H1 (cell line): ENCODE measurements at regions of chr20 and their contacts with region 1.

Region 1: GRCh38 chr20:63230800-63231268 is 4.9 kb upstream of the BIRC7 start:
- DNase-seq: peak in 1 of 2 experiments; percentile 77
- H3K4me3 ChIP-seq: no peak overlapping the region
- H3K27ac ChIP-seq: no peak overlapping the region
- H3K4me1 ChIP-seq: peaks cover 14 to 40% (median 24%) of the 10 kb centered on the region in 4 experiments
- H3K27me3 ChIP-seq: peaks cover 0 to 3% (median 1%) of the 10 kb centered on the region in 4 experiments; a peak in 2 of 7 replicates
- CTCF ChIP-seq: peak; percentile 83 to 90 (median 89)
- EP300 ChIP-seq: no peak
- POLR2A ChIP-seq: no peak
- RAD21 ChIP-seq: peak; percentile 47 to 59

Region 2: DNA sequence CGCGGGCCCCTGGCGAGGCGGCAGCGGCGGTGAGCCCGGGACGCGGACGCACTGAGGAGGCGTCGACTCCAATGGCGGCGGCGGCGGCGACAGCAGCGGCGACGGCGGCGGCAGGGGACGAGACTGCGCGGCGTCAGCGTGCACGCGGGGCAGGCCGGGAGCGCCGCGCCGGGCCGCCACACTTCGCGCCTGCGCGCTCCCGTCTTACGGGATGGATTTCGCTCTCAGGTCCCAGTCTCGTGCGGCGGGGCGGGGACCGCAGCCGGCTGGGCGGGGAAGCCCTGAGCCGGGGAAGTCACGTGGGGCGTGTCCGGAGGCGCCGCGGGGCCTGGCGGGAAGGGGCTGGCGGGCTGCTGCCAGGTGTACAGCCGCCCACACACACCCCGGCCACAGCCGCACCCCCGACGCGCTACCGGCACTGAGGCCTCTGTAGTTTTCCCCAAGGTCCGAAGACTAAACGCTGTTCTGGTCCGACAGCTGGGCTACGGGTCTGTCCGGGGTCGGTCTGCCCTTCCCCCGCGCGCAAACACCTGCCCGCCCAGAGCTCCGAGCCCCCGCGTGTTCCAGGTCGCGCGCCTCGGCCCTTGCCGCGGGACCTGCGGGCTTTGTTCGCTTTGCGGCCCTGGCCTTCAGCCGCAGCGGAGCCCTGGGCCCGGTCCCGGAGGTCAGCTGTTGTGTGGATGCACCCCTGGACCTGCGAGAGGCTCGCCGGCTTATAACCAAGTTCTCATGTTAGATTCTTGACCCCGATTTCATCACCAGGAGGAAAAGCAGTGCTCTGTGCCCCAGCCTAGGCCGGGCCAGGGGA is 14.6 kb before region 1 on chr20 and contains the start of gene YTHDF1:
- CTCF ChIA-PET with region 1: interaction called, 46 read pairs
- POLR2A ChIA-PET with region 1: interaction called, 3 read pairs
- DNase-seq: peak; percentile 70 to 96
- H3K4me3 ChIP-seq: peak within 1 kb of the TSS; percentile 69 to 92 (median 81)
- H3K27ac ChIP-seq: peak within 1 kb of the TSS; percentile 49; the same call in 1 of the 2 replicates
- H3K4me1 ChIP-seq: peaks cover 0 to 11% (median 2%) of the 10 kb centered on the region in 4 experiments; a peak in 4 of 7 replicates
- H3K27me3 ChIP-seq: peaks cover 0 to 3% (median 0%) of the 10 kb centered on the region in 4 experiments; a peak in 1 of 7 replicates
- CTCF ChIP-seq: no peak
- EP300 ChIP-seq: 0 out of 3 replicates have a peak, but pooled peaks of 1 of the 2 experiments have one; percentile 10
- POLR2A ChIP-seq: peak in 1 of 2 experiments; percentile 51; a peak in 1 of 3 replicates
- RAD21 ChIP-seq: no peak
- total RNA-seq, gene YTHDF1: 66.0 and 66.1 TPM in 2 replicates

Region 3: DNA sequence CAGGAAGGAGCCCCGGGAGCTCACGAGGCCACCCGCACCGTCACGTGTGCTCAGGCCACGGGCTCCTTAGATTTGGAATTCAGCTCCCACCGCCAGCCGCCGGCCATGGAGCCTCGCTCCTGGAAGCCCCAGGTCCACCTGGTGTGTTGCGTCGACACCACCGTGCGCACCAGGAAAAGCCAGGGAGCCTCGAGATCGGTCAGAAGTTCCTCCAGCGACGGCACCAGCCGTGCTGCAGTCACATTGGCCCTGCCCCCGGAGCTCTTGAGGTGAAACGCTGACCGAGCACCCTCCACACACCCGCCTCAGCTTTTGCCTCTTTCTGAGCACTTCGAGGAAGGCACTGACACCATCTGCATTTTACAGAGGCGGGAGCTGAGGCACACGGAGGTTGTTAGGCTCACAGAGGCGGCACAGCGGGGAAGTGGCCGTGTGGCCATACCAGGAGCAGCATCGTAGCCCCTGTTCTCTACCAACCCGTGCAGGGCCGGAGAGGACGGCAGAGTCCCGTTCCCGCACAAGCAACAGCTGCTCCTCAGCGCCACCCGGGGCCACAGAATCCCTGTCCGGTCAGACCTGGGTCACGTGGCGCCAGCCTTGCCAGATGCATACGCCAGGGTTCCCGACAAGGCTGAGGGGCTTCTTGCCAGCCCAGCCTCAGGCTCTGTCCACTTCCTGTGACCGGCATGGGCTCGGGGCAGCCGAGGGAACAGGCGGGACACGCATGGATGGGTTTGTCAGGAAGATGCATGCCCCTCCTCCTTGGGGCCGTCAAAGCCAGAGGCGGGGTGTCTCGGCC is 15.9 kb after region 1 on chr20:
- CTCF ChIA-PET with region 1: interaction called, 199 read pairs
- POLR2A ChIA-PET with region 1: interaction called, 10 read pairs
- DNase-seq: peak in 1 of 2 experiments; percentile 72
- H3K4me3 ChIP-seq: no peak overlapping the region
- H3K27ac ChIP-seq: no peak overlapping the region
- H3K4me1 ChIP-seq: peaks cover 0 to 20% (median 12%) of the 10 kb centered on the region in 4 experiments; a peak in 4 of 7 replicates
- H3K27me3 ChIP-seq: peaks cover 0 to 1% (median under 1%) of the 10 kb centered on the region in 4 experiments; a peak in 4 of 7 replicates
- CTCF ChIP-seq: 0 out of 4 replicates have a peak, but pooled peaks of 1 of the 3 experiments have one; percentile 5
- EP300 ChIP-seq: no peak
- POLR2A ChIP-seq: no peak
- RAD21 ChIP-seq: no peak

Region 4: DNA sequence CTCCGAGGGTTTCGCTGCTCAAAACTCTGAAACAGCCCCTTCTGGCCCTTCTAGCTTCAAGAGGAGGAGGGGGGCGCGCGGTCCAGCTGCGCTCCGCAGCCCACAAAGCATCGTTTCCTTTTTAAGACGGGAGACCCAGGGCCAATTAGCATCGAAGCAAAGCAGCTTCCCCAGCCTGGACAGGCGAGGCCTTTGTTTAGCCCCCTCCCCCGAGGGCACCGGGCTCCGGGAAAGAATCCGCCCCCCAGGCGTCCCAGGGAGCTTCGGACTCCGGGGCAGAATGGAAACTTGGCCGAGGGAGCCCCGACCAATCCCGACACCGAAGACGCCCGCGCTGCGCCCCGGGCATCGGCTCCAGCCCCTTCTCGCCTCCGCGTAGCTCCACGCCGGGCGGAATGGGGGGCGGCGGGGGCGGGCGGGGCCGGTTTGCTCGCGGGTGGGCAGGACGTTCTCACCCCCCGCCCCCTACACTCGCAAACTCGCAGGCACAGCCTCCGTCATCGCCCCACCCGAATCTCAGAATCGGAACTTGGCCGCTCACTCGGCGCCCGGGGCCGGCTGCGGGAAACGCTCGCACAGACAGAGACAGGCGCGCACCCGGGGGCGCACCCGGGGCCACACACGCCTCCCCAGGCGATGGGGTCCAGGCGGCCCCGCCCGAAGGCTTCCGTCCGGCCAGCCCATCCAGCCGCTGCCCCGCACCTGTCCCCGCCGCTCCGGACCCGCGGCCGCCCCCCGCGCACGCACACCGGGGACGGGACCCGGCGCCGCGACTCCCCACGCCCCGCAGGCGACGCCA is 22.8 kb after region 1 on chr20:
- CTCF ChIA-PET with region 1: interaction called, 103 read pairs
- POLR2A ChIA-PET with region 1: interaction called, 21 read pairs
- DNase-seq: peak in 1 of 2 experiments; percentile 82
- H3K4me3 ChIP-seq: peak overlapping the region; percentile 36 to 67 (median 54)
- H3K27ac ChIP-seq: no peak overlapping the region
- H3K4me1 ChIP-seq: peaks cover 2 to 18% (median 15%) of the 10 kb centered on the region in 4 experiments
- H3K27me3 ChIP-seq: peaks cover 4 to 51% (median 40%) of the 10 kb centered on the region in 4 experiments
- CTCF ChIP-seq: no peak
- EP300 ChIP-seq: no peak
- POLR2A ChIP-seq: no peak
- RAD21 ChIP-seq: no peak; a peak in 1 of 4 replicates

Region 5: DNA sequence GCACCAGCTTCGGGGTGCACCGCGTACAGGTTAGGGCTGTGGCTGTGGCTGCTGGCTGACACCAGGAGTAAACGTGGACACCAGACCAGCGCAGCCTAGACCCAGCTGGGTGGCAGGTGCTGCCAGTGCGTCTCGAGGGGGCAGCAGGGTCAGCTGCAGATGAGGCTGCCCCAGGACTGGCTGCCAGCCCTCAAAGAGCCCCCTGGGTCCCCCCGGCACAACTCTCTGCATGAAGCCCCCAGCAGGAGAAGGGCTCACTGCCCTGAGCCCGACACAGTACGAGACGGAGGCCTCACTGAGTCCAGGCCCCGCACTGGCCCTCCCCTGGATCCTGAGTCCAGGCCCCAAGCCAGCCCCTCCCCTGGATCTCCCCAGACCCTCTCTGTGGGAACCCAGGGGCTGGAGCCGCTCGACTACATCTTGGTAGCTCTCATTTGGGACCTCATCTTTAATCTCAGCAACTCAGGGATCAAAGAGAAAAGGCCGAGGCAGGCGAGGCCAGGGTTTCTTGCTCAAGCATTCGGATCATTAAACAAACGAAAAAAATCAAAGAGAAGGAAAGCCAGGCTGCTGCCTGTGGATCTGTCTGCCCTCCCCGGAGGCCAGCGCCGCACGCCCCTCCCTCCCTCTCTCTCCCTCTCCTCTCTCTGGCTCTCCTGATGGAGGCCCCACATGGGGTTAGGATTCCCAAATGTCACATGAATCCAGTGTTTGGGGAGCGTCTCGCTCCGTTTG is 30.4 kb after region 1 on chr20:
- CTCF ChIA-PET with region 1: interaction called, 87 read pairs
- POLR2A ChIA-PET with region 1: interaction called, 21 read pairs
- DNase-seq: no peak
- H3K4me3 ChIP-seq: no peak overlapping the region
- H3K27ac ChIP-seq: no peak overlapping the region
- H3K4me1 ChIP-seq: peaks cover 0 to under 1% (median under 1%) of the 10 kb centered on the region in 4 experiments; a peak in 2 of 7 replicates
- H3K27me3 ChIP-seq: peaks cover 0 to 8% (median 1%) of the 10 kb centered on the region in 4 experiments; a peak in 3 of 7 replicates
- CTCF ChIP-seq: no peak
- EP300 ChIP-seq: no peak
- POLR2A ChIP-seq: no peak
- RAD21 ChIP-seq: no peak

Region 6: DNA sequence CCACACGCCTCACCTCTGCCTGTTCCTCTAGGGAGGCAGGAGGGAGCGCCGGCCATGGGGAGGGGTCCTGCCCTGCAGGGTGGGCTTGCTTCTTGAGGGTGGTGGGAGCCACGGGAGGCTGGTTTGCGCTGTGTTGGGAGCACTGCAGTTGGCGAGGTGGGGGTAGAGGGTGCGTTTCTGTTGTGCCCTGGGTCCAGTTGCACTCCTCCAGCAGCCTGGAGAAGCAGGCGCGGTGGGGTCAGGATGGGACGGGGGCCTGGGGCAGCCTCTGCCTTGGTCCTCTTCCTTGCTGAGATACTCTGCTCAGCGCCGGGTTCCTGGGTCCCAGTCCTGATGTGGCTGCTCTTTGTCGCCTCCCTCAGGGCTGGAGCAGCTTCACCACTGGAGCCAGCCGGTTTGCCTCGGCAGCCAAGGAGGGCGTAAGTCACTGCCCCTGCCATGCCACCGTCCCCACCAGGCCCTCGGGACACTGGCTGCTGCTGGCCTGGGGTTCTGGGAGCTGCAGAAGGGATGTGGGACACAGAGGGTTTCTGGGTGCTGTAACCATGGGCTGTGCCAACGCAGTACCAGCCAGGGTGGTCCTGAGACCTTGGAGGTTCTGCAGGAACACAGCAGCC is 50.2 kb after region 1 on chr20:
- CTCF ChIA-PET with region 1: interaction called, 82 read pairs
- POLR2A ChIA-PET with region 1: interaction called, 3 read pairs
- DNase-seq: no peak
- H3K4me3 ChIP-seq: no peak overlapping the region
- H3K27ac ChIP-seq: no peak overlapping the region
- H3K4me1 ChIP-seq: no peaks in the 10 kb centered on the region
- H3K27me3 ChIP-seq: no peaks in the 10 kb centered on the region
- CTCF ChIP-seq: peak; percentile 74 to 84 (median 83)
- EP300 ChIP-seq: no peak
- POLR2A ChIP-seq: no peak
- RAD21 ChIP-seq: peak; percentile 51 to 63

Region 7: DNA sequence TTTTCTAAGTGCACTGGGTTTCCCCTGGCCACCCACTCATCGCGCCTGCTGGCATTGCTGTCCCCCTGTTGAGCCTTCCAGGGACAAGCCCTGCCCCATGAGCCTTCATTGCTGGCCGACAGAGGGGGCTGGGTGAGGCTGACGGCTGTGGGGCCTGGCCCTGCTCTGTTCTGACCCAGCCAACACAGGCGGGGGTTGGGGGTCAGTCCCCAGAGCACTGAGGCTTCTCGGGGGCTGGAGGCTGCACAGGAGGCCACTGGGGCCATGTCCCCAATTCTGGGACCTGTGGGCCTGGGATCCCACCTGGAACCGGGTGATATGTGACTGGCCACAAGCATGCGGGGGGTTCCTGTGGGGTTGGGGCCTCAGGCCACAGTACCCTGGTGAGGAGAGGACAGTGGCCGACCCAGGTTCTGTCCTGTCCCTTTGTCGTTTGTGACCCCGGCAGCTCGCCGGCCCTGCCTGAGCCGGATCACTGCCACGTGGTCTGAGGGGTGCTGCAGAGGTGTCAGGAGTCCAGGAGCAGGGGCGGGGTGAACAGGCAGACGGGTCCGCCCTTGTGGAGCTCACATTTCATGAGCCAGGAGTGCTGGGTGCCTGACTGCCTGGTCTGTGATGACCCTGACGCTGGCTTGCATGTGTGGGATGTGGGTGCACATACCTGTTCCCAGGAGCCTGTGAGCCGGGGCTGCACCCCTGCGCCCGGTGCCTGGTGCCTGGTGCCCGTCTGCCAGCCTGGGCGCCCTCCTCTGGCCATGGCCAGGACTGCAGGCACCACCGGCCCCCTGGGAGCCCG is 60.0 kb after region 1 on chr20:
- CTCF ChIA-PET with region 1: interaction called, 82 read pairs
- POLR2A ChIA-PET with region 1: interaction called, 6 read pairs
- DNase-seq: peak; percentile 33 to 98
- H3K4me3 ChIP-seq: no peak overlapping the region
- H3K27ac ChIP-seq: no peak overlapping the region
- H3K4me1 ChIP-seq: peaks cover 0 to 24% (median 17%) of the 10 kb centered on the region in 4 experiments; a peak in 6 of 7 replicates
- H3K27me3 ChIP-seq: peaks cover 0 to 9% (median 0%) of the 10 kb centered on the region in 4 experiments; a peak in 2 of 7 replicates
- CTCF ChIP-seq: peak; percentile 86 to 90 (median 86)
- EP300 ChIP-seq: no peak
- POLR2A ChIP-seq: no peak
- RAD21 ChIP-seq: peak; percentile 61 to 72

Region 8: GRCh38 chr20:63303095-63303666 is 72.3 kb after region 1 on chr20:
- CTCF ChIA-PET with region 1: no interaction called
- POLR2A ChIA-PET with region 1: no interaction called
- DNase-seq: no peak
- H3K4me3 ChIP-seq: no peak overlapping the region
- H3K27ac ChIP-seq: no peak overlapping the region
- H3K4me1 ChIP-seq: no peaks in the 10 kb centered on the region
- H3K27me3 ChIP-seq: peaks cover 0 to 4% (median 2%) of the 10 kb centered on the region in 4 experiments; a peak in 2 of 7 replicates
- CTCF ChIP-seq: no peak
- EP300 ChIP-seq: no peak
- POLR2A ChIP-seq: no peak
- RAD21 ChIP-seq: no peak